Activated naive CD4-positive, alpha-beta T cell treated with anti-CD3 and anti-CD28 coated beads, Interleukin-2, amount 10 ng/mL, durations not matched to agents 7 days and 5 days (primary cell): ENCODE measurements at regions of chr4 and their contacts with region 1.

Region 1: DNA sequence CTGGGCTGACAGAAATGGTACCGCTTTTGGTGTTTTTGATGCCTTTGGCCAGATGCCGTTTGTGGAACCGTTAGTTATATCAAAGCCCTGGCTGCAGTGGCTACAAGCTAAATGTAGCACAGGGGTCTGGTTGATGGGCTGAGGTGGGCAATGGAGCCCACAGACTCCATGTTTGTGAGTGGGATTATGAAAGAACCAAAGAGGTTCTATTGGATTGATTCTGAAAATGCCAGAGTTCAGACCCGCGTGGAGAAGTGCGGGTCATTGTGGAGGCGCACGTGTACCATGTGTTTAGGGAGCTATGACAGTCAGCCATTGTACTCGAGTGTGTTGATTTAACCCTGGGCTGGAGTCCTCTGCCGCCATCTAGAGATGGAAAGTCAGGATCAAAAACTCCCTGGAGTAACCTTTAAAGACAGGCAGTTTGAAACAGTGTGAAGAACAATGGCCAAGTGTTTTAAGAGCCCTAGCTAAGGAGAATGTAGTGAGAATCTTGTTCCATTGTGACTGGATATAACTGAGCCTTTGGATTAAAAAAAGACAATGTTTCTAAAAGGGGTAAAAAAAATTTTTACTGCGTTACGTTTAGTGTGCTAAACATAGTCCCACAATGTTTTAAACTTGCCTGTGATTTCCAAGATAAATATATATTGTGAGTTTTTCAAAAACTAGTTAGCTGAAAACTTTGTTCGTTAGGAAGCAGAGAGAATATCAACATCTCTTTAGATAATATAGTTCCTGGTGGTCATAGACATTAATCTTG is 12.7 kb downstream of the ART3 start:
- DNase-seq: peak; percentile 27
- H3K4me3 Mint-ChIP-seq: no peak overlapping the region
- H3K27ac Mint-ChIP-seq: no peak overlapping the region
- H3K4me1 Mint-ChIP-seq: peaks cover 3% of the 10 kb centered on the region
- H3K27me3 Mint-ChIP-seq: peaks cover 4% of the 10 kb centered on the region

Region 2: DNA sequence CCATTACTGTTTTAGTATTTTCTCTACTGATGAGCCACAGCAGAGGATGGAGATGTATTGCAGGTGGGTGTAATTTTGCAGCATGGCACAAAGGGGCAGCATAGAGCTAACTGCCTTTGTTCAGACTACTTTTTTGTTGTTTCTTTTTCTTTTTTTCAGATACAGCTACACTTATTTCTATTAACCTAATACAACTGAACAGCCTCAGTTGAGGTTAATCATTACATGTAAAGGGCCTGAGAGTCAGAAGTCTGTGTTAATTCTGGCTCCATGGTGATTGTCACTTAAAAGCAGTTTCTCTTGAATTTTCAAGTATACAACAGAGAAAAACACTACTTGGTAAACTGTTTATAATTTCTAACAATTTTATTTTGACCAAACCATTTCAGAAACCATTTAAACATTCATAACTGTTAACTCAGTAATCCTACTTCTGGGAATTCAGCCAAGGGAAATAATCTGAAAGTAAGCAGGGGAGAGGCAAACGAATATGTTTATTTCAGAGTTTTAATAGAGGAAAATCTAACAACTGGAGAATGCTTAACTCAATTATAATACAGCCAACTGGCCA is 171.0 kb before region 1 on chr4:
- CTCF ChIA-PET with region 1: interaction called, 15 read pairs
- DNase-seq: peak; percentile 53
- H3K4me3 Mint-ChIP-seq: no peak overlapping the region
- H3K27ac Mint-ChIP-seq: peak overlapping the region; percentile 33
- H3K4me1 Mint-ChIP-seq: no peaks in the 10 kb centered on the region
- H3K27me3 Mint-ChIP-seq: no peaks in the 10 kb centered on the region

Region 3: GRCh38 chr4:76105652-76106051 is 18.5 kb after region 1 on chr4:
- CTCF ChIA-PET with region 1: interaction called, 12 read pairs
- DNase-seq: no peak
- H3K4me3 Mint-ChIP-seq: no peak overlapping the region
- H3K27ac Mint-ChIP-seq: no peak overlapping the region
- H3K4me1 Mint-ChIP-seq: no peaks in the 10 kb centered on the region
- H3K27me3 Mint-ChIP-seq: peaks cover 3% of the 10 kb centered on the region

Region 4: GRCh38 chr4:76198411-76199237 is 111.4 kb after region 1 on chr4:
- CTCF ChIA-PET with region 1: no interaction called
- DNase-seq: peak; percentile 25
- H3K4me3 Mint-ChIP-seq: no peak overlapping the region
- H3K27ac Mint-ChIP-seq: no peak overlapping the region
- H3K4me1 Mint-ChIP-seq: peaks cover 32% of the 10 kb centered on the region
- H3K27me3 Mint-ChIP-seq: no peaks in the 10 kb centered on the region

Region 5: GRCh38 chr4:76233957-76234678 is 146.9 kb after region 1 on chr4:
- CTCF ChIA-PET with region 1: no interaction called
- DNase-seq: no peak
- H3K4me3 Mint-ChIP-seq: no peak overlapping the region
- H3K27ac Mint-ChIP-seq: no peak overlapping the region
- H3K4me1 Mint-ChIP-seq: no peaks in the 10 kb centered on the region
- H3K27me3 Mint-ChIP-seq: peaks cover 4% of the 10 kb centered on the region